ENCODE measurements at regions of chr6 and their contacts with region 1.

Region 1: DNA sequence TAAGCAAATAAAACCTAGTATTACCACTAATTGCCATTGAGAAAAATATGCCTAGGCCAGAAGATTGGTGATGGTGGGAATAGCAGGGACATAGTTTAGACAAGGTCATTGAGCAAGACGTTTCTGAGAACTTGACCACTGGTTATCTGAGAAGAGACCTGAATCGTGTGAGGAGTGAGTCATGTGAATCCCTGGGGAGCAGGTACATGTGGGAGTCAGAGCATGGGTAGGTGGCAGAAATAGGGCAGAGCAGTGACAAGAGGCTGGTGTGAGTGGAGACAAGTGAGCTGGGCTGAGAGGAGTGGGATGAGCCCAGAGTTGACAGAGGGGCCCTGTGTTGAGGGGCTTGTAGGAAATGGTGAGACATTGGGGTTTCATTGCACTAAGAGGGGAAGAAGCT is 16.4 kb downstream of the MICA start:
- DNase-seq: no peak
- H3K4me3 ChIP-seq: no peak overlapping the region
- H3K27ac ChIP-seq: no peak overlapping the region
- H3K4me1 ChIP-seq: no peaks in the 10 kb centered on the region
- H3K27me3 ChIP-seq: no peaks in the 10 kb centered on the region
- CTCF ChIP-seq: no peak

Region 2: GRCh38 chr6:30960907-30961673 is 458.8 kb before region 1 on chr6:
- dilution Hi-C with region 1: no loop called
- DNase-seq: no peak
- H3K4me3 ChIP-seq: no peak overlapping the region
- H3K27ac ChIP-seq: no peak overlapping the region
- H3K4me1 ChIP-seq: peaks cover 5% of the 10 kb centered on the region
- H3K27me3 ChIP-seq: peaks cover 6% of the 10 kb centered on the region
- CTCF ChIP-seq: no peak

Region 3: DNA sequence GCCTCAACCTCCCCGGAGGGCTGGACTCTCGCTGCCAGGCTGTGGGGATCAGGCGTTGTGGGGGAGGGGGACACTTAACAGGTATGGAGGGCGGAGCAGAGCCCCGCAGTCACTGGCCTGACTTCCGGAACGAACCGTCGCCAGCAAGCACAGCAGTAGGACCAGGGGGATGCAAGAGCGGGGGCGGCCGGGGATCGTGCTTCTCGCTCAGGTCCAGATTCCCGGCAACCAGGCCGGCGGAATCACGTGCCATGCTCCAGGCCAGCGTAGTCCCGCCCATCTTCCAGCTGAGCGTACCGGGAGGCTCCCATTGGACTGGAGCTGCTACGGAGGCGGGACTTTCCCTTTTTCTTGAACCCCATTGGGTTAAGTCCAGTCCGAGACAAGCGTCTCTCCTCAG is 239.3 kb before region 1 on chr6:
- dilution Hi-C with region 1: no loop called
- DNase-seq: no peak
- H3K4me3 ChIP-seq: no peak overlapping the region
- H3K27ac ChIP-seq: no peak overlapping the region
- H3K4me1 ChIP-seq: peaks cover 17% of the 10 kb centered on the region
- H3K27me3 ChIP-seq: no peaks in the 10 kb centered on the region
- CTCF ChIP-seq: no peak

Region 4: GRCh38 chr6:31479933-31480535 is 60.2 kb after region 1 on chr6:
- dilution Hi-C with region 1: loop called (anchors 10 kb)
- DNase-seq: no peak
- H3K4me3 ChIP-seq: no peak overlapping the region
- H3K27ac ChIP-seq: no peak overlapping the region
- H3K4me1 ChIP-seq: no peaks in the 10 kb centered on the region
- H3K27me3 ChIP-seq: peaks cover 8% of the 10 kb centered on the region
- CTCF ChIP-seq: no peak